HAP-1 (cell line): ENCODE measurements at regions of chr1 and their contacts with region 1.

Region 1: DNA sequence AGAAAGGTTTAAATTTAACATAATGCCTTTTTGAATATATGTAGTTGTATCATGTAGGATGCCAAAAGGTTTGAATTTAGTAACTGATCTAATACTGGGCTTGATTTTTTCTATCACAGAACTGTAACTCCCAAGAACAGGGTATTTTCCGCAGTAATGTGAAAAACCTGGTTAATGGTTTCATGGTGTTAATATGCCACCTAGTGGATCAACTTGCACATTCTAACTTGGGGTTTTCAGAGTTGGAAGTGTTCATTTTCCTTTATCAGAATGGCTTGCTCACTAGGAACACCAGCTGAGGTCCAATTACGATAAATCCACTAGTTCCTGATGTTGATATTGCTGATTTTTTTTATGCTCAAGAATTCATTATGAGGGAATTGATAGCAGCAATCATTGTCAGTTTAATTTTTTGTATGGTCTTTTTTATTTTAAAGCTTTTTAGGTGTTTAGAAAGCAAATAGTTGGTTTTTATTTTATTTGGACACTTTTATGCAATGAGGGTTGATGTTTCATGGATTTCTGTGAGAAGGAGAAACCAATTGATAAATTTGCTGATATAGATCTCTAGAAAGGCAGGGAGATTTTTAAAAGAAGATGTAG is 157.2 kb downstream of the PLA2G4A start:
- DNase-seq: peak; percentile 20 to 73
- H3K4me3 ChIP-seq: no peak overlapping the region
- H3K4me1 ChIP-seq: peaks cover 7% of the 10 kb centered on the region
- H3K27me3 ChIP-seq: no peaks in the 10 kb centered on the region

Region 2: GRCh38 chr1:186482661-186483255 is 503.2 kb before region 1 on chr1:
- in situ Hi-C with region 1: loop called (anchors 10 kb)
- DNase-seq: peak; percentile 61 to 80
- H3K4me3 ChIP-seq: no peak overlapping the region
- H3K4me1 ChIP-seq: peaks cover 4% of the 10 kb centered on the region; the same call in 1 of the 2 replicates
- H3K27me3 ChIP-seq: no peaks in the 10 kb centered on the region; the same call in 1 of the 2 replicates

Region 3: GRCh38 chr1:186618401-186619170 is 367.4 kb before region 1 on chr1:
- in situ Hi-C with region 1: loop called (anchors 10 kb)
- DNase-seq: no peak
- H3K4me3 ChIP-seq: no peak overlapping the region
- H3K4me1 ChIP-seq: no peaks in the 10 kb centered on the region
- H3K27me3 ChIP-seq: no peaks in the 10 kb centered on the region